A549 (cell line): ENCODE measurements at regions of chr2 and their contacts with region 1.

Region 1: DNA sequence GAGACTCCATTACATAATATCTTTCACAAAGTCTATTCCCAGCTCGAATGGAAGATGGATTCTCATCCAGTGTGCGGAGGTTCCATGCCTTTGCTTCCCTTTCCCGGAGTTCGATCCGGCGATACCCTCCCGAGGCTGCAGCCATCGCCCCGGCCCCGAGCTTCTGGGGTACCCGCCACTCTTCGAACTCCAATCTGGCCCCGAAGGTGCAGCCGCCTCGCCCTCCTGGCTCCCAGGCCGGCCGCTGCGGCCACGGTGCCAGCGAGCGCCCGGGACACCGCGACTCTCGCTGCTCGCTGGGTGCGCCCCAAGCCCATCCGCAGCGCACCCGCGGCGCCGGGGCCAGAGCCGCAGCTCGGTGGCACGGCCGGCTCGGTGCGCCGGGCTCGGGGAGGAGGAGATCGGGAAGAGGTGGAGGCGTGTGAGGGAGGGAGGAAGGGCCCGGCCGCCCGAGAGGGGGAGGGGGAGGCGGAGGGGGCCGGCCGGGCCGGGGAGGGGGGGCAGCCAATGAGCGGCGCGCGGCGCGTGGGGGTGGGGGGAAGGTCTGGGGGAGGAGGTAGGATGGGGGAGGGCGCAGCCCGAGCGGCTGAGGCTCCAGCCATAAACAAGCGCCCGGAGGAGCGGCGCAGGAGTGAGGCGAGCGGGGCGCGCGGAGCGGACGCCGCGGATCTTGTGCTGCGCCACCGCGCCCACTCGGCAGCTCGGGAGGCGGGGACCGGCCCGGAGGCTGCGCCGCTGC is at the start of gene CRIM1:
- DNase-seq: peak; percentile 70 to 92
- ATAC-seq: peak; percentile 55 to 68
- H3K4me3 ChIP-seq: peak within 1 kb of the TSS; percentile 90
- H3K27ac ChIP-seq: peak within 1 kb of the TSS; percentile 93 to 97
- H3K4me1 ChIP-seq: peaks cover 45% of the 10 kb centered on the region
- CTCF ChIP-seq: no peak
- EP300 ChIP-seq: no peak
- POLR2A ChIP-seq: peak; percentile 95
- RAD21 ChIP-seq: peak in 1 of 2 experiments; percentile 35; a peak in 2 of 5 replicates
- polyA plus RNA-seq, gene CRIM1: 208 and 275 TPM in 2 replicates

Region 2: DNA sequence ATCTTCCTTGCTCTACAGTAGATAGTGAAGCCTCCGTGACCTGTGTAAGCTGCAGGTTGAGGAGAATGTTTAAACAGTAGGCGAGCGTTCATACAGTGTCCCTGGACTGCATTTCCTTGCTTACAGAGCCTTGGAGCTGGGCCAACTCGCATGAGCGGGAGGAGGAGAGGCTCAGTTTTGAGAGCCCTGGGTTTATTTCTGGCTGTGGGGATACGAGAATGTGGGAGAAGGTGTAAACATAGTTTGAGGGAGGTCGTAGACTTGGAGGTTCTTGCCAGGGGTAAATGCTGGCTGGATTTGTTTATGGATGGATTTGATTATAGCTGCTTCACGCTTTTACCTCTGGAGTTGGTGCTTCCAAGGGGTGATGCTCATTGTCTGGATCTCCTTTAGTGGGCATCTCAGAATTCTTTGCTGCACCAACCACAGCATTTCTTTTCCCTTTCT is 21.0 kb after region 1 on chr2:
- CTCF ChIA-PET with region 1: interaction called, 37 read pairs
- POLR2A ChIA-PET with region 1: interaction called, 11 read pairs
- DNase-seq: peak in 1 of 2 experiments; percentile 77
- ATAC-seq: peak; percentile 16 to 25; a peak in 4 of 6 replicates
- H3K4me3 ChIP-seq: peak overlapping the region; percentile 17
- H3K27ac ChIP-seq: peak overlapping the region; percentile 75 to 84
- H3K4me1 ChIP-seq: peaks cover 100% of the 10 kb centered on the region
- CTCF ChIP-seq: no peak
- EP300 ChIP-seq: no peak
- POLR2A ChIP-seq: no peak
- RAD21 ChIP-seq: no peak

Region 3: DNA sequence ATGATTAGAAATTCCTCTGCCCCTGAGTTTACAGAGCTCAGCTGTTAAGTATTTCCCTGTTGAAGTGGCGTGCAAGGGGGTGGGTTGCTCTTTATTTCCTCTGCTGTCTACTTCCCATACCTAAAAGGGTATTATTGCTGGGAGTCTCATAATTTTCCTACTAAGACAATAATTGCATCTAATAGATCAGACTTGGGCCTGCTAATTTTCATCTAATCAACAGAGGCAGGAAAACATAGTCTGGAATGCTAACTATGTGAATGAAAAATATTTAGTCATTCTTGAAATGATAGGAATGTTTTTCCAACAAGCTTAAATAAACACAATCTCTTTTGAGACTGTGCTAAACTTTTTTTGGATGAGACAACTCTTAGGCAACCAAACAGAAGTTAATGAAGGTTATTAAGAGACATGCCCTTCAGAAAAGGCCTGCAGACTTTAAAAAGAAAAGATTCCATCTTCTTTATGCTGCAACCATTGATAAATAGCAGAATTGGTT is 131.3 kb after region 1 on chr2:
- CTCF ChIA-PET with region 1: interaction called, 16 read pairs
- POLR2A ChIA-PET with region 1: interaction called, 3 read pairs
- DNase-seq: peak in 1 of 2 experiments; percentile 55
- ATAC-seq: peak; percentile 39 to 43; a peak in 3 of 6 replicates
- H3K4me3 ChIP-seq: peak overlapping the region; percentile 5; the same call in 1 of the 3 replicates
- H3K27ac ChIP-seq: peak overlapping the region; percentile 84
- H3K4me1 ChIP-seq: peaks cover 100% of the 10 kb centered on the region
- CTCF ChIP-seq: no peak
- EP300 ChIP-seq: peak; percentile 78 to 81; a peak in 3 of 5 replicates
- POLR2A ChIP-seq: no peak
- RAD21 ChIP-seq: 0 out of 5 replicates have a peak, but pooled peaks of 1 of the 2 experiments have one; percentile 17

Region 4: GRCh38 chr2:36530178-36530982 is 175.1 kb after region 1 on chr2:
- CTCF ChIA-PET with region 1: interaction called, 15 read pairs
- POLR2A ChIA-PET with region 1: no interaction called
- DNase-seq: no peak
- ATAC-seq: no peak
- H3K4me3 ChIP-seq: no peak overlapping the region
- H3K27ac ChIP-seq: no peak overlapping the region
- H3K4me1 ChIP-seq: 0 out of 3 replicates have a peak, but pooled peaks cover 4% of the 10 kb centered on the region
- CTCF ChIP-seq: no peak
- EP300 ChIP-seq: no peak
- POLR2A ChIP-seq: no peak
- RAD21 ChIP-seq: no peak

Region 5: DNA sequence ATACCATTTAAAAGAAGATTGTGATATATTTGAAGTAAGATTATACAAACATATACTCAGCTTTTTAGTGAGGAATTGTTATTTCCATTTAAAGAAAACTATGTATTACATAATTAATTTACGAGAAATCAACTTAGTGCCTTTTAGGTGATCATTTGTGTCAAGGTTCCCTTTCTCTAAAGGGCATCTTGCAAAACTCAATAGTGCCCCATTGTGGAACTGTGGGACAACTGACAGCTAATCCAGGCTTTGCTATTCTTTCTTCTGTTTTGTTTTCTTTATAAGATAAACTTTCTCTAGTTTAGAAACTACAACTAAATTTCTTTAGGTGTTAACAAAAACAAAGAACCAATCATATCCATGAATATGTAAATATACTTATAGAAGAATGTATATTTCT is 316.9 kb after region 1 on chr2:
- CTCF ChIA-PET with region 1: interaction called, 18 read pairs
- POLR2A ChIA-PET with region 1: no interaction called
- DNase-seq: peak in 1 of 2 experiments; percentile 69
- ATAC-seq: peak; percentile 86 to 93
- H3K4me3 ChIP-seq: no peak overlapping the region
- H3K27ac ChIP-seq: no peak overlapping the region
- H3K4me1 ChIP-seq: no peaks in the 10 kb centered on the region
- CTCF ChIP-seq: peak; percentile 89
- EP300 ChIP-seq: no peak
- POLR2A ChIP-seq: no peak
- RAD21 ChIP-seq: peak; percentile 89 to 90